IMR-90 (cell line): ENCODE measurements at regions of chr1 and their contacts with region 1.

Region 1: DNA sequence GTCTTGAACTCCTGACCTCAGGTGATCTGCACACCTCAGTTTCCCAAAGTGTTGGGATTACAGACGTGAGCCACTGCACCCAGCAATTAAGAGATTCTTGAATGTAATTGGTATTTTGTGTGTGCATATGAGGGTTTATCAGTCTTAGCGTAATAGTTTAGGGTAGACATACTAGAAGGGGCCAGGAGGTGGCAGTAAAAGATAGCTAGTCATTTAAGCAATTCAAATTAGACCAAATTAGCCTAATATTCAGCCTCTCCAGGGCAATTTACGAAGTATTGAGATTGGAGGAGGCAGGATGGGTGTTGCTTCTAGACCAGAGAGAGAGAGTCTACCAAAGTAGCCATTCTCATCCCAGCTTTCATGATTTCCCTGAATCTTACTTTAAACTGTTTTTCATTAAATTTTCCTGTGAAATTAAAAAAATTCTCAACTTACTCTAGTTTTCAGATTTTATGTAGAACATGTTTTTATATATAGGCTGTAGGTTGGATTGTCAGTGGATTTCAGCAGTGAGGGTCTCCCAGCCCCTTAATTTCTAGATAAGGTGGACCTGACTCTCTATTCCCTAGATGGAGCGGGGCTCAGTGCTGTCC is 119.7 kb downstream of the HHAT start:
- DNase-seq: peak; percentile 69
- ATAC-seq: peak; percentile 93
- H3K4me3 ChIP-seq: no peak overlapping the region
- H3K27ac ChIP-seq: no peak overlapping the region
- H3K4me1 ChIP-seq: no peaks in the 10 kb centered on the region
- H3K27me3 ChIP-seq: no peaks in the 10 kb centered on the region
- CTCF ChIP-seq: peak; percentile 85
- POLR2A ChIP-seq: no peak
- RAD21 ChIP-seq: peak; percentile 87

Region 2: DNA sequence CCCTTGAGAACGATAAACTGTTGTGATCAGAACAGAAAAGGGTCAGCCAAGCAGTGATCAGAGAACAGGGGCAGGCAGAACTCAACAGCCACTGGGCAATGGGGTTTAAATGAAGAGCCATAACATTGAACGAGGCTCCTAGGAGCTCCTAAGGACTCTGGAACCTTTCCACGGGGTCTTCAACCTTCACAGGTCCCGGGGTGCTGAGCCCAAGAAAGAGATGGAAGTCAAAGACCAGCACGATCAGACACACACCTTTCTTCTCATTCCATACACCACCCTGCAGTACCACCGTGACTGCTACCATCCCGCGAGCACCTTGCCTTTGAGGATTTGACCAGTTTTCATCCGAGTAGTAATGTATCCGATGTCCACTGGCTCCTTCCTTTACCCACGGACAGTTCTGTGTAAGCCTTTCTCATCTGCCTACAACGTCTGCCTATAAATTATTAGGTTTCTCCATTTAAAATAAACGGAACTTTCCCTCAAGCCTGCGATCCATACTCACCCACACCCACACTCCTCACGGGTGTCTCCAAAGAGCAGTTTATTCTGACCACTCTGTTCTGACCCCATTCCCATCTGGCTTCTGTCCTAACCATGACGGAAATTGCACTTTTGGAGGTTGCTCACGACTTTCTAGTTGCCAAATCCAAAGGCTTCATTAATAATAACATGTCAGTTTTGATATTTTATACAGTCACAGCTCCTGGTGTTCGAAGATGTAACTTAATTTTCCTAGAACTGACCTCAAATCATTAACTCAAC is 136.5 kb before region 1 on chr1:
- CTCF ChIA-PET with region 1: no interaction called
- POLR2A ChIA-PET with region 1: no interaction called
- dilution Hi-C with region 1: no loop called
- in situ Hi-C with region 1: no loop called
- intact Hi-C with region 1: no loop called
- DNase-seq: no peak
- ATAC-seq: no peak
- H3K4me3 ChIP-seq: no peak overlapping the region
- H3K27ac ChIP-seq: no peak overlapping the region
- H3K4me1 ChIP-seq: 0 out of 2 replicates have a peak, but pooled peaks cover 2% of the 10 kb centered on the region
- H3K27me3 ChIP-seq: peaks cover 36% of the 10 kb centered on the region
- CTCF ChIP-seq: no peak
- POLR2A ChIP-seq: no peak
- RAD21 ChIP-seq: no peak

Region 3: GRCh38 chr1:210407207-210407886 is 41.0 kb before region 1 on chr1:
- CTCF ChIA-PET with region 1: interaction called, 4 read pairs
- POLR2A ChIA-PET with region 1: no interaction called
- dilution Hi-C with region 1: no loop called
- in situ Hi-C with region 1: loop called (anchors 5 kb)
- intact Hi-C with region 1: loop called (anchors 2 kb)
- DNase-seq: peak; percentile 56
- ATAC-seq: peak; percentile 95
- H3K4me3 ChIP-seq: no peak overlapping the region
- H3K27ac ChIP-seq: no peak overlapping the region
- H3K4me1 ChIP-seq: no peaks in the 10 kb centered on the region
- H3K27me3 ChIP-seq: no peaks in the 10 kb centered on the region
- CTCF ChIP-seq: peak; percentile 98
- POLR2A ChIP-seq: no peak
- RAD21 ChIP-seq: peak; percentile 94

Region 4: DNA sequence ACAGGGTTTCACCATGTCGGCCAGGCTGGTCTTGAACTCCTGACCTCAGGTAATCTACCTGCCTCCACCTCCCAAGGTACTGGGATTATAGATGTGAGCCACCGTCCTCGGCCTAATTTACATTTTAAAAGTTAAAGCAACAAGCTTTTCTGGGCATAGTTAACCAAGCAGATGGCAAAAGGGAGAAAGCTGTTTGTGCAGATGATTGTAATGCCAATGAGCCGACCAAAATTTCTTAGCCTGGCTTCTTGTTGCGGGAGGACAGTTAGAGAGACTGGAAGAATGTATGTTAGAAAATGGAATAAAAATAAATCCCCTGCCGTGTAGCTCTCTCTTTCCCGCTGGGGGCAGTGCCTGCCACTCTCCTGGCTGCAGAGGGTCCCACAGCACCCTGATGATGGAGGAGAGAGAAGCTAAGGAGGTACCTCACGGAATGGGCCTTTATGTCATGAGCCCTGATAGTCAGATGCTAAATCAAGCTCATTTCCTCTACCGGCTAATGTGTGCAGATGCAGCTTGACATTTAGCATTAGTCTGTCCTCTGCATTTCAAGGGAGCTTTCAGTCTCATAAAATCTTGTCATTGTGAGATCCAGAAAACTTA is 32.4 kb before region 1 on chr1:
- CTCF ChIA-PET with region 1: interaction called, 14 read pairs
- POLR2A ChIA-PET with region 1: no interaction called
- dilution Hi-C with region 1: no loop called
- in situ Hi-C with region 1: no loop called
- intact Hi-C with region 1: no loop called
- DNase-seq: no peak
- ATAC-seq: peak; percentile 42; the same call in 1 of the 2 replicates
- H3K4me3 ChIP-seq: no peak overlapping the region
- H3K27ac ChIP-seq: no peak overlapping the region
- H3K4me1 ChIP-seq: no peaks in the 10 kb centered on the region
- H3K27me3 ChIP-seq: no peaks in the 10 kb centered on the region
- CTCF ChIP-seq: 0 out of 2 replicates have a peak, but pooled peaks have one; percentile 20
- POLR2A ChIP-seq: no peak
- RAD21 ChIP-seq: no peak

Region 5: DNA sequence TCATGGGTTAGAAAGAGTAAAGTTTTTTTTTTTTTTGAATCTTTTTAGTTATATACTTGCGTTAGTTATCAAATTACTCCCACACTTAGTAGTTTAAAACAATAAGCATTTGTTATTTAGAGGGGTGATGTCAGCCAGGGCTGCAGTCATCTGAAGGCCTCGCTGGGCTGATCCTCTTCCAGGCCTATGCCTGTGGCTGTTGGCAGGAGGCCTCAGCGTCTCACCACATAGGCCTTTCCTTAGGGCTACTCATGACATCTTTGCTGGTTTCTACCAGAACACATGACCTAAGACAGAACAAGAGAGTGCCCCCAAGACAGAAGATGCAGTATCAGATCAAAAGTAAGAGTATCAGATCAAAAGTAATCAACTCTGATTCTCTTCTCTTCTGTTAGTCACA is 47.7 kb after region 1 on chr1:
- CTCF ChIA-PET with region 1: no interaction called
- POLR2A ChIA-PET with region 1: no interaction called
- dilution Hi-C with region 1: no loop called
- in situ Hi-C with region 1: no loop called
- intact Hi-C with region 1: no loop called
- DNase-seq: peak; percentile 92
- ATAC-seq: peak; percentile 92
- H3K4me3 ChIP-seq: no peak overlapping the region
- H3K27ac ChIP-seq: no peak overlapping the region
- H3K4me1 ChIP-seq: no peaks in the 10 kb centered on the region; the same call in 1 of the 2 replicates
- H3K27me3 ChIP-seq: no peaks in the 10 kb centered on the region
- CTCF ChIP-seq: no peak
- POLR2A ChIP-seq: no peak
- RAD21 ChIP-seq: peak; percentile 13; the same call in 1 of the 2 replicates

Region 6: DNA sequence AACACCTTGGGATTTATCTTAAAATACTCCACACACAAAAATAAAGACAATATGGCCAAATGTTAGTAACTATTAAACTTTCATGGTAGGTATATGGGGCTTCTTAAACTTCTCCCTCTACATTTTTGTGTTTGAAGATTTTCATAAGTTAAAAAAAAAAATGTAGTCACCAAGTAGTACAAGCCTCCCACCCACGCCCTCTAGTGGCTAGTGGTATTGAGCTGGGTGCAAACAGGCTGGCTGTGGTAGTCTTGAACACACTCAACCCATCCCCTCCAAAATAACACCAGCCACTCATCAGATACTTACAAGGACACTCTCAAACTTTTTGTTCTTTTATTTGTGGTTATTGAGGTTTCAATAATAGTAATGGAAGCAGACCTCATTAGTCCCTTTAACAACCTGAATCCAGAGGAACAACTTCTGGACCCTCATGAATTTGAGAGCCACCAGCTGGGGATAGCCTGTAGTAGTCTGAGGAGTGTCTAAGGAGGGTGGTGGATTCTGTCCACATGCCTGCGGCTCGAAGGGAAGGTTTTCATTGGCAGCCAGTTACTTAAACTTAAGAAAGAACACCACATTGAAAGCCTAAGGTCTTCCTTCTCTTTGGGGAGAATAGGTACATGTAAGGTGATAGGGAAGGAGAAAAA is 1027.9 kb after region 1 on chr1:
- CTCF ChIA-PET with region 1: no interaction called
- POLR2A ChIA-PET with region 1: no interaction called
- dilution Hi-C with region 1: no loop called
- in situ Hi-C with region 1: no loop called
- intact Hi-C with region 1: loop called (anchors 5 kb)
- DNase-seq: peak; percentile 63
- ATAC-seq: peak; percentile 93
- H3K4me3 ChIP-seq: no peak overlapping the region
- H3K27ac ChIP-seq: no peak overlapping the region
- H3K4me1 ChIP-seq: no peaks in the 10 kb centered on the region
- H3K27me3 ChIP-seq: peaks cover 36% of the 10 kb centered on the region
- CTCF ChIP-seq: peak; percentile 80
- POLR2A ChIP-seq: no peak
- RAD21 ChIP-seq: peak; percentile 60